ENCODE measurements at regions of chr12 and their contacts with region 1.

Region 1: GRCh38 chr12:98154850-98155249 is 360.5 kb upstream of the TMPO start:
- DNase-seq: peak; percentile 53
- H3K4me3 ChIP-seq: no peak overlapping the region
- H3K27ac ChIP-seq: no peak overlapping the region
- H3K4me1 ChIP-seq: peaks cover 24% of the 10 kb centered on the region
- CTCF ChIP-seq: peak; percentile 70

Region 2: DNA sequence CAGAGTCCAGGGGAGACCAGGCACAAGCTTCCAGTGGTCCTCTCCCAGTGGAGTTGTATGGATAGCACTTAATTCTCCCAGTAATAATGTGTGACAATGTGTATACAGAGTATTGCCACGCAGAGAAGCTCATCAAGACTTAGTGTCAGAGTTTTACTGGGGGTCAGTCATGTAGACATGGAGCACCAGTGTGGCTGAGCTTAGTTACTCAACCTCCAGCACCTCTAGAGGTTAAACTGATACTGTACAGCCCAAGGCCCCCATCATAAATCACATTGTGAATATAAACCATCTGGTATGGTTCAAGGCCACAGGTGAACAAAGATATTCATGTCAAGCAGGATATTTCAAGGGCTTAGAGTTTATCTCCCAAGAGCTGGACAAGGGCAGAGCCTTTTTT is 17.6 kb before region 1 on chr12:
- CTCF ChIA-PET with region 1: no interaction called
- POLR2A ChIA-PET with region 1: interaction called, 14 read pairs
- intact Hi-C with region 1: no loop called
- DNase-seq: no peak
- H3K4me3 ChIP-seq: no peak overlapping the region
- H3K27ac ChIP-seq: no peak overlapping the region
- H3K4me1 ChIP-seq: no peaks in the 10 kb centered on the region
- CTCF ChIP-seq: no peak

Region 3: DNA sequence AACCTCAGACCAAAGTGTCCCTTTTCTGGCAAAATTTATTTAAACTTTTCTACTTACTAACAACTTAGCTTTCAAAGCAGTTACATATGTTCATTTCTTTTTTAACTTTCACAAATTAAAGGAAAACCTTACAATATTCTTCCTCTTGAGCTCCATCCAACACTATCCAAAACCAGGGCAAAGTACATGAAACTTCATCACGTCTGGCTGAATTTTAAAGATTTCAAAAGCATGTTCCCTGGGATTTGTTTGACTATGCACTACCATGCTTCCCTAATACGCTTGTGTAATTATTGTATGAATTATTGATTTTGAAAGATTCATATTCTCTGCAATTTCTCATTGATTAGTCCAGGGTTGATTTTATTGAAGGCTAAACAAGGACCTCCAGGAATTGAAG is 17.5 kb after region 1 on chr12:
- CTCF ChIA-PET with region 1: no interaction called
- POLR2A ChIA-PET with region 1: interaction called, 41 read pairs
- intact Hi-C with region 1: no loop called
- DNase-seq: no peak
- H3K4me3 ChIP-seq: no peak overlapping the region
- H3K27ac ChIP-seq: no peak overlapping the region
- H3K4me1 ChIP-seq: peaks cover 4% of the 10 kb centered on the region
- CTCF ChIP-seq: no peak